CD4-positive, alpha-beta memory T cell (primary cell): ENCODE measurements at regions of chr22 and their contacts with region 1.

Region 1: GRCh38 chr22:40067639-40068038 is 72.9 kb downstream of the FAM83F start:
- DNase-seq: no peak
- H3K4me3 ChIP-seq: no peak overlapping the region
- H3K4me3 Mint-ChIP-seq: peak overlapping the region in 5 of 8 donors; percentile 1 to 65 (median 40)
- H3K27ac ChIP-seq: no peak overlapping the region
- H3K27ac Mint-ChIP-seq: no peak overlapping the region
- H3K4me1 ChIP-seq: peaks cover 80% of the 10 kb centered on the region
- H3K4me1 Mint-ChIP-seq: peaks cover 48 to 90% (median 65%) of the 10 kb centered on the region in 4 donors
- H3K27me3 ChIP-seq: no peaks in the 10 kb centered on the region
- H3K27me3 Mint-ChIP-seq: no peaks in the 10 kb centered on the region

Region 2: GRCh38 chr22:39999144-39999757 is 68.4 kb before region 1 on chr22:
- CTCF ChIA-PET with region 1: no interaction called
- POLR2A ChIA-PET with region 1: no interaction called
- intact Hi-C with region 1: no loop called
- DNase-seq: no peak
- H3K4me3 ChIP-seq: no peak overlapping the region
- H3K4me3 Mint-ChIP-seq: no peak overlapping the region
- H3K27ac ChIP-seq: no peak overlapping the region
- H3K27ac Mint-ChIP-seq: peak overlapping the region in 1 of 7 donors; percentile 18
- H3K4me1 ChIP-seq: peaks cover 6% of the 10 kb centered on the region
- H3K4me1 Mint-ChIP-seq: peaks cover 0 to 2% (median under 1%) of the 10 kb centered on the region in 4 donors
- H3K27me3 ChIP-seq: peaks cover 18% of the 10 kb centered on the region
- H3K27me3 Mint-ChIP-seq: peaks cover 15 to 22% of the 10 kb centered on the region in 2 donors

Region 3: GRCh38 chr22:40220316-40221054 is 152.8 kb after region 1 on chr22:
- CTCF ChIA-PET with region 1: no interaction called
- POLR2A ChIA-PET with region 1: no interaction called
- intact Hi-C with region 1: loop called (anchors 10 kb)
- DNase-seq: no peak
- H3K4me3 ChIP-seq: no peak overlapping the region
- H3K4me3 Mint-ChIP-seq: no peak overlapping the region
- H3K27ac ChIP-seq: no peak overlapping the region
- H3K27ac Mint-ChIP-seq: peak overlapping the region in 4 of 7 donors; percentile 23 to 94 (median 80)
- H3K4me1 ChIP-seq: peaks cover 94% of the 10 kb centered on the region
- H3K4me1 Mint-ChIP-seq: peaks cover 67 to 90% (median 77%) of the 10 kb centered on the region in 4 donors
- H3K27me3 ChIP-seq: no peaks in the 10 kb centered on the region
- H3K27me3 Mint-ChIP-seq: no peaks in the 10 kb centered on the region